ENCODE measurements at regions of chr1 and their contacts with region 1.

Region 1: GRCh38 chr1:15603050-15603965 is 13.9 kb upstream of the DDI2 start:
- DNase-seq: peak; percentile 95
- ATAC-seq: peak; percentile 95
- H3K4me3 Mint-ChIP-seq: peak overlapping the region; percentile 50
- H3K27ac Mint-ChIP-seq: peak overlapping the region; percentile 4
- H3K4me1 Mint-ChIP-seq: peaks cover 6% of the 10 kb centered on the region
- H3K27me3 Mint-ChIP-seq: no peaks in the 10 kb centered on the region
- CTCF ChIP-seq: no peak

Region 2: GRCh38 chr1:15668089-15668754 is 64.9 kb after region 1 on chr1:
- CTCF ChIA-PET with region 1: no interaction called
- POLR2A ChIA-PET with region 1: no interaction called
- intact Hi-C with region 1: no loop called
- DNase-seq: no peak
- ATAC-seq: no peak
- H3K4me3 Mint-ChIP-seq: no peak overlapping the region
- H3K27ac Mint-ChIP-seq: no peak overlapping the region
- H3K4me1 Mint-ChIP-seq: no peaks in the 10 kb centered on the region
- H3K27me3 Mint-ChIP-seq: no peaks in the 10 kb centered on the region
- CTCF ChIP-seq: no peak

Region 3: DNA sequence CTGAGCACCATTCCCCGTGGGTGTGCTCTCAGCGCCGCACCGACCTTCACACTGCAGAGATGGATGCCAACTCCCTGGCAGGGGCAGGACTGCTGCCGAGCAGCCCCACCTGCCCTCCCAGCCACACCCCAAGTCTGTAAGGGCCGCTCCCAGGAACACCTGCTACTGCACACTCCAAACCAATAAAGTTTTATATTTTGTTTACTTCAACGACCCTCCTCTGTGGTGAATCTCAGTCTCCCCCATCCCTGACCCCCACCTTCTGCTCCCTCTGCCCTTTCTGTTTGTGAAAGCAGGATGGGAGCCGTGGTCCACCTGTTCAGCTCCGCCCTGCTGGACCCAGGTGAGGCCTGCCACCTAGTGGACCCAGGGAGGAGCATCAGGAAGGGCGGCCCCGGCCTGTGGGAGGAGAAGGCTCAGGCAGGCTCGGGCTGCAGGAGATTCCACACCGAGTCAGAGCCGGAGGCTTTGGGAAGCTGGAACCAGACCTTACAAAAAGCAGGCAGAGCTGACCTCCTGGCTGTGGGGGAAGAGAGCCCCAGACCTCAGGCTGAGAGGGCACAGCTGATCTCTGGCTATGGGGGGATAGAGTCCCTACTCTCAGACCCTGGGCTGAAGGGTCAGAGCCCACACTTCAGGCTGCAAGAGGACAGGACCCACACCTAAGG is 138.0 kb after region 1 on chr1:
- CTCF ChIA-PET with region 1: no interaction called
- POLR2A ChIA-PET with region 1: no interaction called
- intact Hi-C with region 1: loop called (anchors 10 kb)
- DNase-seq: peak; percentile 84
- ATAC-seq: peak; percentile 97
- H3K4me3 Mint-ChIP-seq: no peak overlapping the region
- H3K27ac Mint-ChIP-seq: no peak overlapping the region
- H3K4me1 Mint-ChIP-seq: peaks cover 6% of the 10 kb centered on the region
- H3K27me3 Mint-ChIP-seq: no peaks in the 10 kb centered on the region
- CTCF ChIP-seq: peak; percentile 88

Measured in activated CD8-positive, alpha-beta T cell treated with anti-CD3 and anti-CD28 coated beads for 36 hours (primary cell).